Activated CD4-positive, alpha-beta memory T cell treated with anti-CD3 and anti-CD28 coated beads for 36 hours (primary cell): ENCODE measurements at regions of chr5 and their contacts with region 1.

Region 1: DNA sequence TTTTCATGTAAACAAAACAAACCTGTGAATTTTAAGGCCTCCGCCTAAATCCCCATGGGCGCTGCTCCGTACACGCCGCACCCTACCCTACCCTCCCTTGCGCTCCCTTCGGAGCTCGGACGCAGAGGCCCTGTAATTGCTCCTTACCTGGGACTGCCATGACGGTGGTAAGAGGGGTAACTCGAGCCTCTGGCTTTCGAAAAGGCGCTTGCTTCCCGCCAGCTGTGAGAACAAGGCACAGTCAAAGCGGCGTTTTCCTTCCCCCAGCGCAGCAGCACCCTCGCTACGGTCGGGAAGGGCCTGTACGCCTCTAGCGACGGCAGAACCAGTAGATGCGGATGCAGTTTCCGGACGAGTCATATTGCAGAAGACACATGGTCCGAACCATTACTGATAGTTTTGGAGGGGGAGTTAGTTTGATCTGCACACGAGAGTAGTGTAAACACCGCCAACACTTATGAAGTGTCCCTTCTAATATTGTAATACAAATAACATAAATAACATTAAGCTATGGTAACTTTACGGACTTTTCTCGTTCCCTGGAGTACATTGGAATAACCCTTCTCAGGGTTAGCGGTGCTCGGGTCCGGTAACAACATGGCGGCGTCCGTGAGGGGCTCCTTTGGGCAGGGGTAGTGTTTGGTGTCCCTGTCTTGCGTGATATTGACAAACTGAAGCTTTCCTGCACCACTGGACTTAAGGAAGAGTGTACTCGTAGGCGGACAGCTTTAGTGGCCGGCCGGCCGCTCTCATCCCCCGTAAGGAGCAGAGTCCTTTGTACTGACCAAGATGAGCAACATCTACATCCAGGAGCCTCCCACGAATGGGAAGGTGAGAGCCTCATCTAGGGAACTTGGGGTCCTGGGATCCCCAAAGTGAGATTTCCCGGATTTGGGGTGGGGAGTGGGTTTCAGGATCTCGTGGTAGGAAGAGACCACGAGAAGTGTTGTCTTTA is at the starts of genes CWC27 and SREK1IP1:
- DNase-seq: peak; percentile 89
- H3K4me3 Mint-ChIP-seq: peak within 1 kb of the TSS; percentile 100
- H3K27ac Mint-ChIP-seq: peak within 1 kb of the TSS; percentile 94
- H3K4me1 Mint-ChIP-seq: peaks cover 43% of the 10 kb centered on the region
- H3K27me3 Mint-ChIP-seq: no peaks in the 10 kb centered on the region
- total RNA-seq, gene CWC27: 31.4 to 33.7 TPM
- total RNA-seq, gene SREK1IP1: 20.2 to 24.3 TPM

Region 2: GRCh38 chr5:64634997-64635686 is 133.5 kb before region 1 on chr5:
- CTCF ChIA-PET with region 1: interaction called, 3 read pairs
- POLR2A ChIA-PET with region 1: no interaction called
- intact Hi-C with region 1: loop called (anchors 5 kb)
- DNase-seq: no peak
- H3K4me3 Mint-ChIP-seq: no peak overlapping the region
- H3K27ac Mint-ChIP-seq: no peak overlapping the region
- H3K4me1 Mint-ChIP-seq: no peaks in the 10 kb centered on the region
- H3K27me3 Mint-ChIP-seq: peaks cover 16% of the 10 kb centered on the region

Region 3: DNA sequence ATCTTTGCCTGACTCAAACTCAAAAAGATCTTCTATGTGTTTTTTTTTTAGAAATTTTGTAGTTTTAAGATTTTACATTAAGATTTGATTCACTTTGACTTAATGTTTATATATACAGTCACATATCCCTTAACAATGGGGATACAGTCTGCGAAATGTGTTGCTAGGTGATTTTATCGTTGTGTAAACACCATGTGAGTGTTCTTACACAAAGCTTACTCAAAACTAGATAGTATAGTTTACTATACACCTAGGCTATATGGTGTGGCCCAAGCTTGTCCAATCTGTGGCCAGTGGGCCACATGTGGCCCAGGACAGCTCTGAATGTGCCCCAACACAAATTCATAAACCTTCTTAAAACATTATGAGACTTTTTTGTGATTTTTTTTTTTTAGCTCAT is 132.0 kb after region 1 on chr5:
- CTCF ChIA-PET with region 1: no interaction called
- POLR2A ChIA-PET with region 1: no interaction called
- intact Hi-C with region 1: no loop called
- DNase-seq: no peak
- H3K4me3 Mint-ChIP-seq: no peak overlapping the region
- H3K27ac Mint-ChIP-seq: no peak overlapping the region
- H3K4me1 Mint-ChIP-seq: no peaks in the 10 kb centered on the region
- H3K27me3 Mint-ChIP-seq: no peaks in the 10 kb centered on the region